PC-3 (cell line): ENCODE measurements at regions of chr20 and their contacts with region 1.

Region 1: DNA sequence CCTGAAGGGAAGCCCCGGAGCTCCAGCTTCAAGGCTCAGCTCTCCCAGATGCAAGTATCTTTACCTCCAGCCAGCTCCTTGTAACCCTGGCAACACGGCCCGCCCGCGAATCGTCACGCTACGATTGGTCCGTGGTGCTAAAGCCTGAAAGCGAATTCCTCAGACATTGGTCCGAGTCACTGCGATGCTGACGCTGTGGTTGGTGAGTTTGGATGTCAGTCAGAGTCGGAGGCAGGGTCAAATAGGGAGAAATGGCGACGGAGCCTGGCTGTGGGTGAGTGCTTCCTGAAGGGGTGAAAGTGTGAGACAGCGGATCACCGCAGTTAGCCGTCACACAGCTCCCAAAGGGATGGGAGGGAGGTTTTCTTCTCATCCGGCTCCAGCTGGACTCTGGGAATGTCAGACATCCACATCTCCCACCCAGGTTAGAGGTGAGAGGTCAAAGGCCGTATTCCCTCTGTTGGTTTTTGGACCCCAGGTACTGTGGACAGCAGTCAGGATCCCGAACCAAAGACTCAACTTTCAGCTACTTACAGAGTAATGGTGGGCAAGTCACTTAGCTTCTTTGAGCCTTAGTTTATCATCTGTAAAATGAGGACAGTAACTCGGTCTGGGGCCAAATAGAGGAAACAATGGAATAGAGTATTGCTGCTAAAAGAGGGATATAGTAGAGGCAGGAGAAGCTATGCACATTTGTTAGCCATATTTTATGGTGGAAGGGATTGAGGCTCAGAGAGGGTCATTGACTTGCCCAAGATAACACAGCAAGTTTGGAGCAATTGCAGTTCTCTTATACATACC is at the start of gene ZSWIM1:
- DNase-seq: peak; percentile 100
- ATAC-seq: peak; percentile 97
- H3K4me3 ChIP-seq: peak within 1 kb of the TSS; percentile 96
- H3K27ac ChIP-seq: peak within 1 kb of the TSS; percentile 36
- H3K4me1 ChIP-seq: peaks cover 22% of the 10 kb centered on the region
- H3K27me3 ChIP-seq: no peaks in the 10 kb centered on the region
- CTCF ChIP-seq: no peak
- total RNA-seq, gene ZSWIM1: 9.4 and 16.3 TPM in 2 replicates

Region 2: GRCh38 chr20:45704969-45705637 is 176.1 kb before region 1 on chr20 and contains the start of gene WFDC10B:
- CTCF ChIA-PET with region 1: no interaction called
- POLR2A ChIA-PET with region 1: no interaction called
- intact Hi-C with region 1: no loop called
- DNase-seq: no peak
- ATAC-seq: no peak
- H3K4me3 ChIP-seq: no peak within 1 kb of the TSS
- H3K27ac ChIP-seq: no peak within 1 kb of the TSS
- H3K4me1 ChIP-seq: no peaks in the 10 kb centered on the region
- H3K27me3 ChIP-seq: 0 out of 2 replicates have a peak, but pooled peaks cover 3% of the 10 kb centered on the region
- CTCF ChIP-seq: no peak
- total RNA-seq, gene WFDC10B: not detected in 2 replicates

Region 3: GRCh38 chr20:45833030-45833882 is 47.9 kb before region 1 on chr20 and contains the start of gene SNX21:
- CTCF ChIA-PET with region 1: no interaction called
- POLR2A ChIA-PET with region 1: no interaction called
- intact Hi-C with region 1: no loop called
- DNase-seq: peak; percentile 82
- ATAC-seq: peak; percentile 77
- H3K4me3 ChIP-seq: peak within 1 kb of the TSS; percentile 78
- H3K27ac ChIP-seq: peak within 1 kb of the TSS; percentile 66
- H3K4me1 ChIP-seq: peaks cover 35% of the 10 kb centered on the region
- H3K27me3 ChIP-seq: no peaks in the 10 kb centered on the region
- CTCF ChIP-seq: no peak
- total RNA-seq, gene SNX21: 90.1 and 108 TPM in 2 replicates

Region 4: DNA sequence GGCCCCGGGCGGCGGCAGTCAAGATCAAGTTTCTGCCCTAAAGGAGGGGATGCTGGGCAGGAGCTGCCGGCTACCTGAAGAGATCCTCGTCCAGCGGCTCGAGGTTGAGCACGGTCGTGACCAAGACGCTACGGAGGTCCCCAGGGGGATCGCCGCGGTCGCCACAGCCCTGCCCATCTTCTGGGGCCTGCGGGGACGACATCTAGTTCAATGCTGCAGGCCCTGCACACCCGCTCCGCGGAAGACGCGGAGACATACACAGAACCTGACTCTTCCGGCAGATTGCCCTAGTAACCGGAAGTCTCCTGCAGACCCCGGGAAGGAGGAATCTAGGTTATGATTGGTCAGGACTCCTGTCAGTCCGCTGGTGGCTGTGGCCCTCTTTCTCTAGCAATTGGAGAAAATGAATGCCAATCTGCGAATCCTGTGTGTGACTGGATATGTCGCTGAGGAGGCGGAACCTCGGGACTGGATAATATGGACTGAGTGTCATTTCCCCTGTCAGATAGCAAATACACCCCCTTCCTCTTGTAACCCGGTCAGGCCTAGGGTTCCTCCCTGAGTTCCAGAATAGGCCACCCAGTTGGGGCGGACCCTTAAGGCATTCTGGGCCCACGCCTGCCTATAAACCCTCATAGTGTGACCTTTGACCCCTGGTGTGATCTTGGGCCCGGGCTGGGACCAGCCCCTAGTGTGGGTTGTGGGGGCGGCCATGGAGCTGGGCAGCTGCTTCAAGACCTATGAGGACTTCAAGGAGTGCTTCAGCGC is 23.9 kb before region 1 on chr20 and contains the starts of genes ACOT8 and ZSWIM3:
- CTCF ChIA-PET with region 1: no interaction called
- POLR2A ChIA-PET with region 1: no interaction called
- intact Hi-C with region 1: loop called (anchors 2 kb)
- DNase-seq: peak; percentile 100
- ATAC-seq: peak; percentile 97
- H3K4me3 ChIP-seq: peak within 1 kb of the TSS; percentile 87
- H3K27ac ChIP-seq: peak within 1 kb of the TSS; percentile 8; the same call in 1 of the 2 replicates
- H3K4me1 ChIP-seq: peaks cover 30% of the 10 kb centered on the region
- H3K27me3 ChIP-seq: no peaks in the 10 kb centered on the region
- CTCF ChIP-seq: no peak
- total RNA-seq, gene ACOT8: 57.4 and 58.8 TPM in 2 replicates
- total RNA-seq, gene ZSWIM3: 2.1 and 4.2 TPM in 2 replicates